Ovary (tissue), 10 donors: ENCODE measurements at regions of chr3 and their contacts with region 1.

Region 1: DNA sequence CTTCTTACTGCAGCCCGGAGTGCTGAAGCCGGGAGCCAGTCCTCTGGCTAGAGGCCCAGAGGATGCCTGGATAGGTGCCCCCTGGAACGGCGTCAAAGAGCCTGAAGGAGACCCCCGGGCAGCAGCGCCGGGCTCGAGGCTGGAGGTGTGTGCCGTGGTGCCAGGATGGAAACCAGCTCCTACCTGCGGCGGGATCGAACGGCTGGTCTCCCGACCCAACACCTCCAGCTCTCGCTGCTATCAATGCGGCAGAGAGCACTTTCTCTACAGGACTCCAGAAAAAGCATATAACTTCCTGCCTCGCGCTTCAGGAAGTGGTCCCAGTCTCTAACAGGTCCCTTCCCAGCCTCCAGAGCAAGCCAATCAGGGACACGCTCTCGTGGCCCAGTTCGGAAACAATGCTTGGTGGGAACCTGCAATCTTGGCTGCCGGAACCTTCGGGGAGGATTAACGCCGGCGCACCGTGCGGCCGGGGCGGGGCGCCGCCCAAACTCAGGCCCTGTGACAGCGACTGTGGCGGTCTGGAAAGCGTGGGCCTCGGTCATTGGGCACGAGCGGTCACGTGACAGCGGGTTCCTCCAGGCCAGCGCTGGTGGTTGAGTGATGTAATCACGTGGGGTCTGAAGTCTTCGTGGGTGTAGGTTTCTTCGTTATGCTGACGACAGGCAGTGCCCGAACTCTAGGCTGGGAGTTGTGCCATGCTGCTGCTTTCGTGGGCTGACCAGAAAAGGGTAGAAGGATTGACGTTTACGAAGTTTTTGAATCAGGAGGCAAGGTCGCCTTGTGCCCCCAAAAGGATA is at the start of gene SLC33A1:
- DNase-seq: peak; percentile 98 to 99 (median 99)
- H3K4me3 ChIP-seq: peak within 1 kb of the TSS; percentile 99
- H3K27ac ChIP-seq: peak within 1 kb of the TSS; percentile 3 to 86
- H3K4me1 ChIP-seq: peaks cover 20% of the 10 kb centered on the region
- H3K27me3 ChIP-seq: no peaks in the 10 kb centered on the region
- CTCF ChIP-seq: no peak
- EP300 ChIP-seq: no peak
- POLR2A ChIP-seq: peak; percentile 82
- total RNA-seq, gene SLC33A1: 18.4 to 35.4 (median 26.6) TPM

Region 2: DNA sequence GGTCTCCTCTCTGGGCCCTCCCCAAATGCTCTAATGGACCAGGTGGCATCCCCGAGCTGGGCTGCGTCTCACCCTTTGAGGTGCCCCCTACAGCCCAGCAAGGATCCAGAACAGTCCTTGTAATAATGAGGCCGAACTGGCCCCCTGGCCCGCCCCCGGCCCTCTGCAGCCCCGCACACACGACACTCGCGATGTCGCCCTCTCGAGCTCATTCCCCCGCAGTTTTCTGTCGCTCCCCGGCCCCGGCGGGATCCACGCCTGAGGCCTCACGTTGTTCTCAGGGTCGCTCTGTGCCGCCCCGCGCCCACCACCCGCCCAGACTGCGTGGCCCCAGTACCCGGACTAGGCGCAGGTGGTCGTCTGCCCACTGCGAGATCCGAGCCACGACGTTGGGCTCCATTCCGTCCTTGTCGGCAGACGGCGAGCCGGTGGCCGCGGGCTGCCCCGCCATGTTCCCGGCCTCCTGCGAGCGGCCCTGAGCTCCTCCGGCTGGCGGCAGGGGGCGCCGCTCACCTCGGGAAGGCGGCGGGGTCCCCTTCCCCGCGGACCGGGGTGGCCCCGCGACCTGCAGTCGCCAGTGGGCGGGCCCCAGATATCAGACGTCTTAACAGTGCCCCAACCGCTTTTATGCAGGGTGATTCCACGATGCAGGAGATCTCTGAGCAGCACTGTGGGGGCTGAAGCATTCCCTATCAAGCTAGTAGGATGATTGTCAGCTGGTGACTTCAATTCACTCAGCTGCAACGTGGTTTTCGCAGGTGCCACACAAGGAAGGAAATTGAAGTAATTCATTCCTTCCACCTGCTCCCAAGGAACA is 48.3 kb before region 1 on chr3 and contains the start of gene C3orf33:
- intact Hi-C with region 1: loop called in 1 of 4 experiments (anchors 5 kb)
- DNase-seq: peak; percentile 54 to 78 (median 67)
- H3K4me3 ChIP-seq: peak within 1 kb of the TSS; percentile 91
- H3K27ac ChIP-seq: peak within 1 kb of the TSS; percentile 75 to 79
- H3K4me1 ChIP-seq: no peaks in the 10 kb centered on the region
- H3K27me3 ChIP-seq: no peaks in the 10 kb centered on the region
- CTCF ChIP-seq: peak; percentile 69 to 83 (median 82)
- EP300 ChIP-seq: no peak
- POLR2A ChIP-seq: no peak
- total RNA-seq, gene C3orf33: 4.5 to 7.6 (median 6.3) TPM